Lower leg skin (tissue), 4 donors: ENCODE measurements at regions of chr9 and their contacts with region 1.

Region 1: DNA sequence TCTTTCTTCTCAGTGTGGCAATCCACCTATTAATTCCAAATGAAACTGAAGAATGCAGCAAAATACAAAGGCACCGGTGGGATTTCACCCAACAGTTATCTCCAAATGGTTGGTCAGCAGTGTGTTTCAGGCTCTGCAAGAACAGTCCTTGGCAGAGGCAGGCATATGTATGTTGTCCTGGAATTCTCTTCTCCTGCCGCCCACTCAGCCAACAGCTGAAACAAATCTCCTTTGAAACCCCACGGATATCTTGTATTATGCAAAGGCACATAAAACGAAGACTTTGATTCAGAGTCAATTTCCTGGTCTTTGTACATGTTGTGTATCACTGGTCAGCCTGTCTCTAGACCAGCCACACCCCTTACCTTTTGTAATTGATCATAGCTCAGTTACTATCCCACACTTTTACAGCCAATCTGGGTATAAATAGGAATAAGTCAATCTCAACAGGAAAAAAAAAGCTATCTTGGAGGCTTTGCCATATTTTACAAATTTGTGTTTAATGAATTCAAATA is 29.2 kb downstream of the FREM1 start:
- DNase-seq: no peak
- H3K4me3 ChIP-seq: no peak overlapping the region
- CTCF ChIP-seq: no peak
- POLR2A ChIP-seq: no peak

Region 2: DNA sequence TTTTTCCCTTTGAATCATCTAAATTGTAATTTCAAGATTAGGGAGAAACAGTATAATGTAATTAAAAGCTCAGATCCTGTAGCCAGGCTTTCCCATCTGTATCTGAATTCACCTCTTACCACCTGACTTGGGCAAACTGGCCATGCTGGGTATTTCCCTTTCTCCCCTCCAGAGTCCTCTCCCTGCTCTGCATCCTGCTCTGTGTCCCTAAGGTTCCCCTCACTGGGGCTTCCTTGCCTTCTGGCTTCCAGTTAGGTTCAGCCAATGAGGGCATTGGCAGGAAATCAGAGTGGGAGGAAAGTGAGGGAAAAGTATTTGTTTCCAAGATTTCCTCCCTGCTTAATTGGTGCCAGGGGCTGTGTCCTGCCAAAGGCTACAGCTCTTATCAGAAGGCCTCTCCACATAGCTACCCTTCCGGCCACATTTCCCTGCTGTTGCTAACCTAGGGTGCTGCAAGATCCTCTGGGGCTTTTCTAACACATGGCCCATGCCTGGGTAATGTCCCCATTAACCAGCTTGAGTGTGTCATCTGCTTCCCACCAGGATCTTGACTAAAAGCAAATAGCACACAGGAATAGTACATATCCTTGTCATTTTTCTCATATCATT is 1550.5 kb before region 1 on chr9:
- intact Hi-C with region 1: no loop called
- DNase-seq: no peak
- H3K4me3 ChIP-seq: no peak overlapping the region
- CTCF ChIP-seq: no peak
- POLR2A ChIP-seq: no peak

Region 3: DNA sequence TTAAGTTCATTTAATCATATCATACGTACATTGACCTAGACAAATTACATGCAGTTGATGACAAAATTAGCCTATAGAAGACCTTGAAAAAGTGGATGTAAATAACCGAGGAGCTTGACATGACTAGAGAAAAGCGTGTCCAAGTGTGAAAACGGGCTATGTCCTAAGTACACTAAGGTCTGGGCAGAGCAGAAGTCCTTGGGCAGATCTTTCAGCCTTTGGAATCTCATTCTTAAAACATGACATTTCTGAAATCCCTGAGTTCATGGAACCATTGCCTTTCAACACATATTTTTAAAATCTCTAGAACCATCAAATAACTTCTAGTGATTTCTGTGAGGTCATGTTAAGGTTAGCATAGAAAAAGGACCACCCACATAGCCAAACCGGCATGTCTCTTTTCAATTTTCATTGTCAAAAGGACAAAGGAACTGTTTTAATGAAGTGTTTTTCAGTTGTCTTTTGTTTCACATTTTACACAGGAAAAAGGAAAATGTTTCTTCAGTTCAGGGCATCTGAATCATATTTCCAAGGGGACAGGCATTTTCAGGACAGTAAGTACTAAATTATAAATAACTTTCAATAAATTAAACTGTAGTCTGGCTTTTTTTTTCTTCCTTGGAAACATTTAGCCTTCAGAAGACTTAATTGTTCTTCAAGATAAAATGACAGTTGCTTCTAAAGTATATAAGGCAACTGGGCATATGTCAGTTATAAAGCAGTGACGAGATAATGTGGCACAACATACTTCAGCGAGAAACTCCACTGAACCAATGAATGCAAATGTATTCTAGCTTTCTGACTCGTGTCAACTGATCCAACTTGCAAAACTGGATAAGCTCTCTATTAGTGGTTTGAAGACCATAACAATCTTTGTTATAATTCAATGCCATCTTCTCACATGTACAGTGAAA is 983.8 kb before region 1 on chr9:
- intact Hi-C with region 1: no loop called
- DNase-seq: no peak
- H3K4me3 ChIP-seq: no peak overlapping the region
- CTCF ChIP-seq: no peak
- POLR2A ChIP-seq: no peak

Region 4: DNA sequence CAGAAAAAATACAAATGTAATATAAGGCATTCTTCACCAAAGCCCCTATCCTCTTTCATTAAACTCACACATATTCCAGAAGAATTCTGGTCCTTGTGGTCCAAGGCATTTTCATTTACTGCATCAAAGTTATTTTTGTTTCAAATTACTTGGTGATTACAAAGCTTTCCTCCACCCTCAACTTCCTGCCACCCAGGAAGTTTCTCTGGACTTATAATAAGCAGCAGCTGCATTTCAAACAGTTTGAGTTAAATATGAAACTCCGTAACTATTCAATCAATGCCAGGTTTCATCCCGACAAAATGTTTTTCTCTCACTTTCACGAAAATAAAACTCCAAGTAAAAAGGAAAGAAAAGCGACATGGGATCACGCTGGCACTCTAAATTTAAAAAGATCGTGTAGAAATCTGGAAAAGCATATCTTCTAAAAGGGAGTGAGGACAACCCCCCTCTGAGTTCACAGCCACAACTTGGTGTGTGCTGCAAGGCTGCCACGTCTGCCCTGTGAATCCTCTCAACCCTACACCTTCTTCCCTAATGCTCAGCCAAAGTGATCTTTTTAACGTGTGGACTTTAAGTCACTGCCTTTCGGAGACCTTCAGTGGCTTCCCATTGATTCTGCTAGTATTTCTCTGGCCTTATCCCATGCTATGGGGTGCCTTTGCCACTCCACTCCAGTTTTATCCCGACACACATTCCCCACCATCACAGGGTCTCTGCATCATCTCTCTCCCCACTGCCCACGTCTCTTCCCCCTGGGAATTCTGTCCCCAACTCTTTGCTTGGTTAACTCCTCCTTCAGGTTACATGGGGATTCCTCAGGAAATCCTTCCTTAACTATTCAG is 67.5 kb before region 1 on chr9:
- intact Hi-C with region 1: loop called (anchors 2 kb)
- DNase-seq: no peak
- H3K4me3 ChIP-seq: no peak overlapping the region
- CTCF ChIP-seq: no peak
- POLR2A ChIP-seq: no peak